ENCODE measurements at regions of chr11 and their contacts with region 1.

Region 1: GRCh38 chr11:72430741-72431570 is 3.4 kb downstream of the CLPB start:
- DNase-seq: peak; percentile 16 to 61 (median 52)
- ATAC-seq: peak; percentile 25
- H3K4me3 ChIP-seq: no peak overlapping the region
- H3K4me3 Mint-ChIP-seq: peak overlapping the region in 9 of 10 donors; percentile 18 to 70 (median 57)
- H3K27ac ChIP-seq: no peak overlapping the region
- H3K27ac Mint-ChIP-seq: peak overlapping the region; percentile 6 to 84 (median 79)
- H3K4me1 ChIP-seq: peaks cover 12 to 13% of the 10 kb centered on the region in 2 donors
- H3K4me1 Mint-ChIP-seq: peaks cover 18 to 48% (median 40%) of the 10 kb centered on the region in 7 donors
- H3K27me3 ChIP-seq: no peaks in the 10 kb centered on the region
- H3K27me3 Mint-ChIP-seq: no peaks in the 10 kb centered on the region

Region 2: DNA sequence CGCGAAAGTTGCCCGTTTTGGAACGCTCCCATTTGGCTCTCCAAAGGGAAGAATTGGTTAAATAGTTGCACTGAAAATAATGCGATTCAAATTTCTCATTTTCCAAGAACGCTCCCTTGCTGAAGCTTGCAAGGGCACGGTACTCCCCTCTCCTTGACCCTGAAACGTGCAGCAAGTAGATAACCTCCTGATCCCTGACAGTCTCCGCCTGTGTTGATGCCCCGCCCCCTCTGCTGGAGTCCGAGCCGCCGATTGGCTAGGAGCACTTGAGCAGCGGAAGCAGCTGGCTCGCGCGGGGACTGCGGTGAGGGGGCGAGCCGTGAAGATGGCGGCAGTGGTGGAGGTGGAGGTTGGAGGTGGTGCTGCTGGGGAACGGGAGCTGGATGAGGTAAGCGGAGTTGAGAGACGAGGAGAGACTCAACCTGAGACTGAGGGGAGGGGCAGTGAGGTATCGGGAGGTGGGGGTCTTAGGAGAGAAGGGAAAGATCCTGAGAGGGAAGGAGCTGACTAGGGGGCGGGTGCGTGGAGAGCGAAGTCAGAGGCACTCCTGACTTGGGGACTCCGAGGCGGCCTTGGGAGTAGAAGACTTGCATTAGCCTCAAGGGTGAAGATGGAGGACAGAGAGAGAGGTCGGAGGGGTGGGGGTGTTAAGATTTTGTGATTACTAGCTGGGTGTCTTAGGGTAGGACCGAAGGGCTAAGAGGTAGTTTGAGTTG is 502.1 kb before region 1 on chr11 and contains the start of gene RNF121:
- CTCF ChIA-PET with region 1: no interaction called
- POLR2A ChIA-PET with region 1: no interaction called
- intact Hi-C with region 1: loop called (anchors 1 kb)
- DNase-seq: peak; percentile 91 to 99 (median 96)
- ATAC-seq: peak; percentile 97
- H3K4me3 ChIP-seq: peak within 1 kb of the TSS; percentile 97
- H3K4me3 Mint-ChIP-seq: peak within 1 kb of the TSS; percentile 92 to 100 (median 98)
- H3K27ac ChIP-seq: peak within 1 kb of the TSS; percentile 88
- H3K27ac Mint-ChIP-seq: peak within 1 kb of the TSS; percentile 94 to 100 (median 98)
- H3K4me1 ChIP-seq: peaks cover 17 to 22% of the 10 kb centered on the region in 2 donors
- H3K4me1 Mint-ChIP-seq: peaks cover 26 to 70% (median 60%) of the 10 kb centered on the region in 7 donors
- H3K27me3 ChIP-seq: no peaks in the 10 kb centered on the region
- H3K27me3 Mint-ChIP-seq: no peaks in the 10 kb centered on the region
- total RNA-seq, gene RNF121: 18.2 to 37.2 (median 29.2) TPM

Region 3: DNA sequence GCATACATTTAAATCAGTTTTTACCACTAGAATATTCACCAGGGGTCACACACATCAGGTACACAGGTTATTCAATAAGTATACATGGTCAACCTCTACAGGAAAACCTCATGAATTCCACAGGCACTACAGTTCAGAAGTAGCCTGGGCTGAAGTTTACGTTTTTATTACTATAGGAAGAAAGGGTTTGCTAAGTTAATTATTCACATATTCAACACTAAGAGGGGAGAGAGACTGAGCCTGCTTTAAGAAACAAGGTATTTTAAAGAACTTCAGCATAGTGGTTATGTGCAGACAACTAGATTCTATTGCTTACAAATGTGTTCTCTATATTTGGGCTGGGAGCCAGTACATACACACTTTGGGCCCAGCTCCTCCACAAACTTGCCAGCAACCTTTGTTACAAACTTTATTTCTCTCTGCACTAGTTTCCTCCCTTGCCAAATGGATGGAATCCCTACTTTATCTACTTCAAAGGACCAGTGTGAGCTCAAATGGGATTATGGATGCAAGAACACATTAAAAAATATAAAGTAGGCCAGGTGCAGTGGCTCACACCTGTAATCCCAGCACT is 400.4 kb before region 1 on chr11:
- CTCF ChIA-PET with region 1: no interaction called
- POLR2A ChIA-PET with region 1: no interaction called
- intact Hi-C with region 1: loop called (anchors 1 to 2 kb)
- DNase-seq: no peak
- ATAC-seq: no peak
- H3K4me3 ChIP-seq: no peak overlapping the region
- H3K4me3 Mint-ChIP-seq: peak overlapping the region in 8 of 10 donors; percentile 18 to 57 (median 34)
- H3K27ac ChIP-seq: peak overlapping the region; percentile 65
- H3K27ac Mint-ChIP-seq: peak overlapping the region in 8 of 9 donors; percentile 45 to 92 (median 70)
- H3K4me1 ChIP-seq: peaks cover 9 to 28% of the 10 kb centered on the region in 2 donors
- H3K4me1 Mint-ChIP-seq: peaks cover 25 to 80% (median 72%) of the 10 kb centered on the region in 7 donors
- H3K27me3 ChIP-seq: no peaks in the 10 kb centered on the region
- H3K27me3 Mint-ChIP-seq: no peaks in the 10 kb centered on the region

Region 4: GRCh38 chr11:72102946-72103753 is 327.8 kb before region 1 on chr11 and contains the start of gene LAMTOR1:
- CTCF ChIA-PET with region 1: no interaction called
- POLR2A ChIA-PET with region 1: no interaction called
- intact Hi-C with region 1: loop called in 1 of 2 experiments (anchors 2 kb)
- DNase-seq: peak; percentile 87 to 98 (median 95)
- ATAC-seq: peak; percentile 98
- H3K4me3 ChIP-seq: peak within 1 kb of the TSS; percentile 54
- H3K4me3 Mint-ChIP-seq: peak within 1 kb of the TSS; percentile 66 to 97 (median 86)
- H3K27ac ChIP-seq: peak within 1 kb of the TSS; percentile 93
- H3K27ac Mint-ChIP-seq: peak within 1 kb of the TSS; percentile 83 to 98 (median 94)
- H3K4me1 ChIP-seq: peaks cover 20% of the 10 kb centered on the region in 2 donors
- H3K4me1 Mint-ChIP-seq: peaks cover 37 to 49% (median 44%) of the 10 kb centered on the region in 7 donors
- H3K27me3 ChIP-seq: no peaks in the 10 kb centered on the region
- H3K27me3 Mint-ChIP-seq: no peaks in the 10 kb centered on the region
- total RNA-seq, gene LAMTOR1: 41.8 to 83.0 (median 69.7) TPM

Region 5: DNA sequence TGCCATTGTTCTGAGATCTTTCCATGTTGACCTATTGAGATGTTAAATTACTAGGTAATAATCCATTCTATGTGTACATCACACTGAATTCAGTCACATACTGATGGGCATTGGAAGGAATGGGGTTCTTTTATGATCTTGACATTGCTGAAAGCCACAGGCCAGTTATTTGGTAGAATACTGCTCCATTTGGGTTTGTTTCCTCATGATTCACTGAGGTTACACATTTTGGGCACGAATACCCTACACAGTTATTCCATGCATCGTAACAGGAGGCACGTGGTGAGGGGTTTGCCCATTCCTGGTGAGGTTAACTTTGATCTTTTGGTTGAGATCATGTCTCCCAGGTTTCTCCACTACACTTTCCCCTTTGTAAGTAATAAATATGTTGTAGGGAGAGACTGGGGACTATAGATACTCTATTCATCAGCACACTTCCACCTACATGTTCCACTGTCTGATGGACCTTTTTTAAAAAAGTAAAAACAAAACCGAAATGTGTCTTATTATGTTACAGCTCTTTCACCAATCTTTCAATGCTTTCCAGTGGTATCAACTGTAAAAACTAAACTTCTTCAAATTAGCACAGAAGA is 251.1 kb before region 1 on chr11:
- CTCF ChIA-PET with region 1: no interaction called
- POLR2A ChIA-PET with region 1: no interaction called
- intact Hi-C with region 1: loop called in 1 of 2 experiments (anchors 1 kb)
- DNase-seq: no peak
- ATAC-seq: no peak
- H3K4me3 ChIP-seq: no peak overlapping the region
- H3K4me3 Mint-ChIP-seq: no peak overlapping the region
- H3K27ac ChIP-seq: no peak overlapping the region
- H3K27ac Mint-ChIP-seq: no peak overlapping the region
- H3K4me1 ChIP-seq: no peaks in the 10 kb centered on the region
- H3K4me1 Mint-ChIP-seq: peaks cover 0 to 5% (median 3%) of the 10 kb centered on the region in 7 donors
- H3K27me3 ChIP-seq: no peaks in the 10 kb centered on the region
- H3K27me3 Mint-ChIP-seq: peaks cover 6 to 24% (median 10%) of the 10 kb centered on the region in 5 donors

Region 6: GRCh38 chr11:72293910-72294615 is 136.9 kb before region 1 on chr11:
- CTCF ChIA-PET with region 1: interaction called, 6 read pairs
- POLR2A ChIA-PET with region 1: no interaction called
- intact Hi-C with region 1: loop called (anchors 1 to 5 kb)
- DNase-seq: no peak
- ATAC-seq: no peak
- H3K4me3 ChIP-seq: no peak overlapping the region
- H3K4me3 Mint-ChIP-seq: no peak overlapping the region
- H3K27ac ChIP-seq: no peak overlapping the region
- H3K27ac Mint-ChIP-seq: no peak overlapping the region
- H3K4me1 ChIP-seq: no peaks in the 10 kb centered on the region
- H3K4me1 Mint-ChIP-seq: peaks cover 0 to 2% (median 0%) of the 10 kb centered on the region in 7 donors
- H3K27me3 ChIP-seq: no peaks in the 10 kb centered on the region
- H3K27me3 Mint-ChIP-seq: no peaks in the 10 kb centered on the region

Region 7: DNA sequence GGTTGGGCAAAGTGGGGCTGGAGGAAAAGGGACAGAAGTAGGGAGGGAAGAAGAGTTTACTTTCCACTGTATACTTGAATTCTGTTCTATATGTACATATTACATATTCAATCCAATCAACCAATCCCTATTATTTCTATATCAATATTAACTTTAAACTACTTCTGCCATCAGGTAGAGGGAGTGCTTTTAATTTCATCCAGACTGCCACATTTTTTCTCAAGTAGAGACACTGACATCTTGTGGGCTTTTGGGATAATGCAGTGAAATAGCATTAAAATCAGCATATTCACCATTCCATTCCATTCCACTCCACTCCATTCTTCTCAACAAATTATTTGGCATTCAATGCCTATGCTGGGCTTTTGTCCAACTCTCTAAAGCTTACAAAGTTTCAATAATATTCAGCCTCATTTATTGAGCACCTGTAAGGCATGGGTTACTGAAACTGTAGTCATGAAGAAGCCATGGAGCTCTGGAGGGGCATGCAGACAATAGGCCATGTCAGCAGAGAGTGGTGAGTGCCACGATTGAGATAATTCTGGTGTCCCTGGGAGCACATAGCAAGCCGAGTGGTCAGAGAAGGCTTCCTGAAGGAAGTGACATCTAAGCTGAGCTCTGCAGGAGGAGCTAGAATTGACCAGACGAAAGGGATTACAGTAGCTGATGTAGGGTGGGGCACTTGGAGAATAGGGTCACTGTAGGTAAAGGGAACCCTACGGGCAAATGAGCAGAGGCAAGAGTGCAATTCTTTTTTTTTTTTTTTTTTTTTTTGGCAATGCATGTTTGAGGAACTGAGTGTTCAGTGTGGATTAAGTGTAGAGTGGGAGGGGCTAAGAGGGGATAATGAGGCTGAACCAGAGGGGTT is 16.2 kb after region 1 on chr11:
- CTCF ChIA-PET with region 1: interaction called, 9 read pairs
- POLR2A ChIA-PET with region 1: interaction called, 3 read pairs
- intact Hi-C with region 1: loop called in 1 of 2 experiments (anchors 1 kb)
- DNase-seq: peak in 7 of 9 donors; percentile 35 to 60 (median 49)
- ATAC-seq: peak; percentile 91
- H3K4me3 ChIP-seq: no peak overlapping the region
- H3K4me3 Mint-ChIP-seq: no peak overlapping the region
- H3K27ac ChIP-seq: no peak overlapping the region
- H3K27ac Mint-ChIP-seq: no peak overlapping the region
- H3K4me1 ChIP-seq: no peaks in the 10 kb centered on the region
- H3K4me1 Mint-ChIP-seq: peaks cover 0 to 2% (median 0%) of the 10 kb centered on the region in 7 donors
- H3K27me3 ChIP-seq: no peaks in the 10 kb centered on the region
- H3K27me3 Mint-ChIP-seq: peaks cover 4 to 44% (median 8%) of the 10 kb centered on the region in 5 donors

Measured in naive thymus-derived CD4-positive, alpha-beta T cell (primary cell).